ENCODE measurements at regions of chrX and their contacts with region 1.

Region 1: GRCh38 chrX:107776649-107777535 is 641 bp upstream of the NCBP2L start:
- DNase-seq: peak; percentile 38 to 88 (median 77)
- ATAC-seq: peak; percentile 66
- H3K4me3 ChIP-seq: peak overlapping the region; percentile 63 to 70
- H3K4me3 Mint-ChIP-seq: peak overlapping the region; percentile 89
- H3K27ac ChIP-seq: peak overlapping the region; percentile 56 to 71
- H3K27ac Mint-ChIP-seq: peak overlapping the region; percentile 90
- H3K4me1 ChIP-seq: peaks cover 10% of the 10 kb centered on the region
- H3K4me1 Mint-ChIP-seq: peaks cover 24% of the 10 kb centered on the region
- H3K27me3 ChIP-seq: no peaks in the 10 kb centered on the region
- H3K27me3 Mint-ChIP-seq: no peaks in the 10 kb centered on the region
- CTCF ChIP-seq: peak; percentile 50

Region 2: DNA sequence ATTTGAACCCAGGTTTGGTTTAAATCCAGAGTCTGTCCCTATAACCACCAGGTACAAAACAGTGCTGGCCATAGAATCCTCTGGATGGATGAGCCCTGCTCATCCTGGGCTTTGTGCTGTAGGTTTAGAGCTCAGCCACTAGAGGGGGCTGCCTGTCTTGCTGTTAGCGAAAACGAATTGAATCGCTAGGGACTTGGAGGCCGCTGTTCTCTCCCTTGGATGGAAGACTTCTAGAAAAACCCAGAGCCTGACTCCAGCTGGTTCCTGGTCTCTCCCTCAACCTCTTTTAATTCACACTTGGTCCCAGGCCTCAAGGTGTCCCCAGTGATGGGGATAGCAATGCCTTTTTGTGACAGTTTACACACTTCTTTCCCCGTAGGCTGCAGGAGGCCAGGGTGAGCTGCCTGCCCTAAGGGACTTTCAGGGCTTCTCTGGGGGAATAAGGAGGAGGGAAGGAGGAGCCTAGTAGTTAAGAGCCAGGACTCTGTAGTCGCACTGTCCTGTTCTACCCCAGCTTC is 882.4 kb before region 1 on chrX:
- CTCF ChIA-PET with region 1: interaction called, 3 read pairs
- POLR2A ChIA-PET with region 1: no interaction called
- intact Hi-C with region 1: loop called (anchors 2 to 5 kb)
- DNase-seq: peak in 8 of 9 experiments; percentile 6 to 59 (median 48)
- ATAC-seq: peak; percentile 61
- H3K4me3 ChIP-seq: no peak overlapping the region
- H3K4me3 Mint-ChIP-seq: no peak overlapping the region
- H3K27ac ChIP-seq: no peak overlapping the region
- H3K27ac Mint-ChIP-seq: no peak overlapping the region
- H3K4me1 ChIP-seq: no peaks in the 10 kb centered on the region
- H3K4me1 Mint-ChIP-seq: no peaks in the 10 kb centered on the region
- H3K27me3 ChIP-seq: no peaks in the 10 kb centered on the region
- H3K27me3 Mint-ChIP-seq: peaks cover 4% of the 10 kb centered on the region
- CTCF ChIP-seq: peak; percentile 47

Region 3: GRCh38 chrX:107118322-107119147 is 658.4 kb before region 1 on chrX and contains the start of gene RBM41:
- CTCF ChIA-PET with region 1: no interaction called
- POLR2A ChIA-PET with region 1: no interaction called
- intact Hi-C with region 1: loop called (anchors 2 to 10 kb)
- DNase-seq: peak; percentile 46 to 87 (median 72)
- ATAC-seq: peak; percentile 99
- H3K4me3 ChIP-seq: peak within 1 kb of the TSS; percentile 68 to 70
- H3K4me3 Mint-ChIP-seq: peak within 1 kb of the TSS; percentile 95
- H3K27ac ChIP-seq: peak within 1 kb of the TSS; percentile 49 to 77
- H3K27ac Mint-ChIP-seq: peak within 1 kb of the TSS; percentile 95
- H3K4me1 ChIP-seq: peaks cover 11% of the 10 kb centered on the region
- H3K4me1 Mint-ChIP-seq: peaks cover 37% of the 10 kb centered on the region
- H3K27me3 ChIP-seq: no peaks in the 10 kb centered on the region
- H3K27me3 Mint-ChIP-seq: no peaks in the 10 kb centered on the region
- CTCF ChIP-seq: no peak
- total RNA-seq, gene RBM41: 6.9 to 7.8 TPM

Region 4: DNA sequence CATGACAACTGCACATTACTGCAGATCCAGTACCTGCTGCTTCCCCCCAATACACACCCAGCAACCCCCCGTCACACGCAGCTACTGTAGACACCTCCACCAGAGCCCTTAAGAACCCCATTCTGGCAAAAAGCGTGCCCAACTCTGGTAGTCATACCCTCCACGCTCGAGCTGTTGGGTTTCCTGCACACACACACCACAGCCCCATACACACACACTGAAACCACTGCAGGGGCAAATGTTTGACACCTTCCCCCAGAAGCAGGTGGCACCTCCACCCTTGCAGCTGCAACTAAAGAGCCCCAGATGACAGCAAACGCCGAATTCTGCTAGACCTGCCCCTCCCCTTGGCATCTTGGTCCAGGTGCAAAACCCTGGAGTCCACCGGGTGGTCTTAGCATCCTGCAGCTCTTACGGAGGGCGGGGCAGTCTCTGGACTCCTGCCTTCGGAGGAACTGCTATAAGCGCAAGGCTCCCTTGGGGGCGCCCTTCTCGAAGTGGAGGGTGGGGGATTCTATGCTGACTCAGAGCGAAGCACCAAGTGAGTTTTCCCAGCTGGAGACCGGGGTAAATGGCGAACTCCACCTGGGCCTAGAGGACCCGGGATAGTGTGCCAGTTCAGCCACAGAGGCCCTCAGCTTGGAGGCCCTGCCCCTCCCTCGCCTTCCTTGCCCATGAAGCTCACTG is 325.9 kb before region 1 on chrX:
- CTCF ChIA-PET with region 1: no interaction called
- POLR2A ChIA-PET with region 1: no interaction called
- intact Hi-C with region 1: no loop called
- DNase-seq: peak in 6 of 9 experiments; percentile 11 to 81 (median 54)
- ATAC-seq: peak; percentile 57
- H3K4me3 ChIP-seq: peak overlapping the region; percentile 23 to 46
- H3K4me3 Mint-ChIP-seq: peak overlapping the region; percentile 78
- H3K27ac ChIP-seq: peak overlapping the region in 1 of 2 experiments; percentile 73
- H3K27ac Mint-ChIP-seq: peak overlapping the region; percentile 75
- H3K4me1 ChIP-seq: no peaks in the 10 kb centered on the region
- H3K4me1 Mint-ChIP-seq: peaks cover 18% of the 10 kb centered on the region
- H3K27me3 ChIP-seq: no peaks in the 10 kb centered on the region
- H3K27me3 Mint-ChIP-seq: peaks cover 26% of the 10 kb centered on the region
- CTCF ChIP-seq: no peak

Region 5: DNA sequence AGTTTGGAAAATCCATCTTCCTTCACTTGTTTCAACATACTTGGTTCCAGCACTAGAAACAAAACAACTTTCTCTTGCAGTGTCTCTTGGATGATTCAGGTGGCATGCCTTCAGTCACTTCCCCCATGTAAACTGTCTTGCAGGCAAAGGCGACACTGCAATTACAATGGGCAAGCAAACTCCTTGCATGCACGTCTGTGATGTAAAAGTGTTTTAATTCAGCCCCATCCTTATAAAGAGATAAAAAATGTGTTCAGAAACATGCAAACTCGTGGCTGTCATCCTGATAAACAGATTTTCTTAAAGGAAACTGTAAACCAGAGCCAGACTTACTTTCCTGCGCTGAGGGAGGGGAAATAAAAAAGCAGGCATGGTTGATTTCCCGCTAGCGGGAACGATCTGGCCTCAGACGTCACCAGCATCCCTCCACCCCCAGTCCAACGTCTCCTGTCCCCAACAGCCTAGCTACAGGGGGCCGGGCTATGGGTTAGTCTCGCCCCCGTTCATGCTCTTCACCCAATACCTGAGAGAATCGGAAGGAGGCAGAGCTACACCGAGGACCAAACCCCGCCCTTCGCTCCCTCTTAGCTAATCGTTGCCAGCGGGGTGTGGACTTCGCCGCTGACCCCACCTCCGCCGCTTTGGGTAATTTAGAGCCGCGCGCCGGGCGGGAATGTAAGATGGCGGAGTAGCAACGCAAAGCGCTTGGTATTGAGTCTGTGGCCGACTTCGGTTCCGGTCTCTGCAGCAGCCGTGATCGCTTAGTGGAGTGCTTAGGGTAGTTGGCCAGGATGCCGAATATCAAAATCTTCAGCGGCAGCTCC is 148.8 kb before region 1 on chrX and contains the start of gene PRPS1:
- CTCF ChIA-PET with region 1: interaction called, 10 read pairs
- POLR2A ChIA-PET with region 1: interaction called, 3 read pairs
- intact Hi-C with region 1: no loop called
- DNase-seq: peak; percentile 76 to 95 (median 87)
- ATAC-seq: peak; percentile 96
- H3K4me3 ChIP-seq: peak within 1 kb of the TSS; percentile 81 to 95
- H3K4me3 Mint-ChIP-seq: peak within 1 kb of the TSS; percentile 87
- H3K27ac ChIP-seq: peak within 1 kb of the TSS; percentile 79 to 95
- H3K27ac Mint-ChIP-seq: peak within 1 kb of the TSS; percentile 93
- H3K4me1 ChIP-seq: peaks cover 8% of the 10 kb centered on the region
- H3K4me1 Mint-ChIP-seq: peaks cover 33% of the 10 kb centered on the region
- H3K27me3 ChIP-seq: no peaks in the 10 kb centered on the region
- H3K27me3 Mint-ChIP-seq: no peaks in the 10 kb centered on the region
- CTCF ChIP-seq: no peak
- total RNA-seq, gene PRPS1: 65.6 to 74.7 TPM

Region 6: DNA sequence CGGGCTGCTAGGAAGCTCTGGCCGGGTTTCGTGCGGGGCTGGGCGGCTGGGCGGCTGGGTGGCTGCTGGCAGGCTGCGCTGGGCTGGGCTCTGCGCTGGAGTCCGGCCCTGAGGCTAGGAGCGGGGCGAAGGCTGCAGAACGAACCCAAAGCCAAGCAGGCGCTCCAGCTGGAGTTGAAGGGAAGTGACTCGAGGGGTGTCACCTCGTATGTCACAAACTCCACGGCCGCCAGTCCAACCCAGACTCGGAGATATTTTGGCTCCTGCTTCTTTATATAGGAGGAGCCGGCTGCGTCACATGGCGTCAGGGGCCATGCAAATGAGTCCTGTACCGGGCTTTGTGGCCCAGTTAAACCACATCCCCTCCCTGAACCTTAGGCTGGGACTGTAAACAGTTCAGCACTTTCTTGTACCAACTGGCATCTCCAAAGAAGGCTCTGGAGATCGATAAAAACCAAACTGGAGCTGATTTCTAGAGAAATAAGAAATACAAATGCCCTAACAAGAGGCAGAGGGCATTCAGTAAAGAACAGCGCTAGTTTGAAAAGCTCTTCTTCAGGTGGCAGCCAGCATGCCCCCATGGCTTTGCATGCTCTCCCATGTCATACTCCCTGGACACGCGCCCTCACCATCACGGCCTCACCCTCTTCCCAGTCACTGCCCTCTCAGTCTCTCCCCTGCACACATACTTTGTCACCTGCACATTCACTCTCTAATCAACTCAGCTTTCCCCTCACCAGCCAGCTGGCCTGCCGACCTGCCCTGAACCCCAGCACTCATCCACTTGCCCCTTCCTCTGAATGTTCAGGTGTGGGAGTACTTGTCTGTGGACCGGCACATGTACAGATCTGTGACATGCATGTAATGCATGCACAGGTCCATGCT is 59.8 kb before region 1 on chrX:
- CTCF ChIA-PET with region 1: interaction called, 59 read pairs
- POLR2A ChIA-PET with region 1: interaction called, 35 read pairs
- intact Hi-C with region 1: loop called (anchors 1 kb)
- DNase-seq: peak; percentile 78 to 94 (median 90)
- ATAC-seq: peak; percentile 66
- H3K4me3 ChIP-seq: peak overlapping the region; percentile 78 to 91
- H3K4me3 Mint-ChIP-seq: peak overlapping the region; percentile 93
- H3K27ac ChIP-seq: peak overlapping the region; percentile 100
- H3K27ac Mint-ChIP-seq: peak overlapping the region; percentile 99
- H3K4me1 ChIP-seq: peaks cover 42% of the 10 kb centered on the region
- H3K4me1 Mint-ChIP-seq: peaks cover 48% of the 10 kb centered on the region
- H3K27me3 ChIP-seq: no peaks in the 10 kb centered on the region
- H3K27me3 Mint-ChIP-seq: no peaks in the 10 kb centered on the region
- CTCF ChIP-seq: no peak

Region 7: GRCh38 chrX:107826238-107827029 is 49.5 kb after region 1 on chrX:
- CTCF ChIA-PET with region 1: interaction called, 3 read pairs
- POLR2A ChIA-PET with region 1: interaction called, 3 read pairs
- intact Hi-C with region 1: loop called in 1 of 2 experiments (anchors 5 kb)
- DNase-seq: peak; percentile 2 to 67 (median 25)
- ATAC-seq: peak; percentile 66
- H3K4me3 ChIP-seq: peak overlapping the region; percentile 52 to 61
- H3K4me3 Mint-ChIP-seq: peak overlapping the region; percentile 89
- H3K27ac ChIP-seq: peak overlapping the region in 1 of 2 experiments; percentile 69
- H3K27ac Mint-ChIP-seq: peak overlapping the region; percentile 86
- H3K4me1 ChIP-seq: peaks cover 25% of the 10 kb centered on the region
- H3K4me1 Mint-ChIP-seq: peaks cover 43% of the 10 kb centered on the region
- H3K27me3 ChIP-seq: no peaks in the 10 kb centered on the region
- H3K27me3 Mint-ChIP-seq: peaks cover 8% of the 10 kb centered on the region
- CTCF ChIP-seq: no peak

Region 8: GRCh38 chrX:108070891-108071290 is 294.0 kb after region 1 on chrX:
- CTCF ChIA-PET with region 1: interaction called, 4 read pairs
- POLR2A ChIA-PET with region 1: no interaction called
- intact Hi-C with region 1: loop called (anchors 2 to 5 kb)
- DNase-seq: no peak
- ATAC-seq: no peak
- H3K4me3 ChIP-seq: no peak overlapping the region
- H3K4me3 Mint-ChIP-seq: no peak overlapping the region
- H3K27ac ChIP-seq: no peak overlapping the region
- H3K27ac Mint-ChIP-seq: peak overlapping the region; percentile 2
- H3K4me1 ChIP-seq: no peaks in the 10 kb centered on the region
- H3K4me1 Mint-ChIP-seq: peaks cover 3% of the 10 kb centered on the region
- H3K27me3 ChIP-seq: no peaks in the 10 kb centered on the region
- H3K27me3 Mint-ChIP-seq: no peaks in the 10 kb centered on the region
- CTCF ChIP-seq: no peak

Region 9: DNA sequence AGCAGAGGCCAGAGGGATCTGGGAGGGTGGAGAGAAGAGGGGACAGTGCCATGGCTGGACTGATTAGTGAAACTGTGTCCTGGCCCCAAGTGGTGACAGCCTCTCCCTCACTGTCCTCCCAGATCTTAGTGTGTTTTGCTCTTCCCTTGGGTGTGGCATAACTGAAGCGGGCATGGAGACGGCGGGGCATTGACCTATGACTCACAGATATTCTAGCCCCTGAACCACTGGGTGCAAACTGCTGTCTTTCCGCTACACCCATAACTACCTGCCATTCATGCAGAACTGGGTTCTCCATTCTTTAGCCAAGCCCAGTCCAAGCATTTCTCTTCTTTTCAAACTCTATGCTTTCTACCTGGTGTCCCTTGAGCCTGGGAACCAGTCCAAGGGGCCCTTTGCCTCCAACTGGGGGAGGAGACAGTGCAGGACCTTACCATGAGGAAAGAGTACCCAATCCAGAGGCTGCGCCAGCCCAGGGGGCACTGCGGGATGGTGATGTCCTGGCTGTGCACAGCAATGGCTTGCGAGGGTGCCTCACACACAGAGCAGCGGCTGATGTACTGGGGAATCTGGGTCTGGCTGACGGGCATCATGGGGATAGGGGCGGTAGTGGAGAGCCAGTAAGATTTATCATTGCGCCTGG is 382.3 kb after region 1 on chrX:
- CTCF ChIA-PET with region 1: no interaction called
- POLR2A ChIA-PET with region 1: no interaction called
- intact Hi-C with region 1: no loop called
- DNase-seq: no peak
- ATAC-seq: no peak
- H3K4me3 ChIP-seq: no peak overlapping the region
- H3K4me3 Mint-ChIP-seq: no peak overlapping the region
- H3K27ac ChIP-seq: no peak overlapping the region
- H3K27ac Mint-ChIP-seq: no peak overlapping the region
- H3K4me1 ChIP-seq: no peaks in the 10 kb centered on the region
- H3K4me1 Mint-ChIP-seq: no peaks in the 10 kb centered on the region
- H3K27me3 ChIP-seq: no peaks in the 10 kb centered on the region
- H3K27me3 Mint-ChIP-seq: no peaks in the 10 kb centered on the region
- CTCF ChIP-seq: no peak

Region 10: GRCh38 chrX:108601266-108601665 is 824.4 kb after region 1 on chrX:
- CTCF ChIA-PET with region 1: no interaction called
- POLR2A ChIA-PET with region 1: no interaction called
- intact Hi-C with region 1: no loop called
- DNase-seq: no peak
- ATAC-seq: no peak
- H3K4me3 ChIP-seq: no peak overlapping the region
- H3K4me3 Mint-ChIP-seq: no peak overlapping the region
- H3K27ac ChIP-seq: no peak overlapping the region
- H3K27ac Mint-ChIP-seq: no peak overlapping the region
- H3K4me1 ChIP-seq: no peaks in the 10 kb centered on the region
- H3K4me1 Mint-ChIP-seq: no peaks in the 10 kb centered on the region
- H3K27me3 ChIP-seq: no peaks in the 10 kb centered on the region
- H3K27me3 Mint-ChIP-seq: no peaks in the 10 kb centered on the region
- CTCF ChIP-seq: no peak